Activated T-helper 2 cell treated with anti-CD3 and anti-CD28 coated beads, Interferon-gamma antibody, Interleukin-2, Interleukin-4, amounts not matched to agents 10 μg/mL and 5 μg/mL and 100 μg/mL, durations not matched to agents 14 hours and 24 hours and 36 hours (primary cell): ENCODE measurements at regions of chr16 and their contacts with region 1.

Region 1: DNA sequence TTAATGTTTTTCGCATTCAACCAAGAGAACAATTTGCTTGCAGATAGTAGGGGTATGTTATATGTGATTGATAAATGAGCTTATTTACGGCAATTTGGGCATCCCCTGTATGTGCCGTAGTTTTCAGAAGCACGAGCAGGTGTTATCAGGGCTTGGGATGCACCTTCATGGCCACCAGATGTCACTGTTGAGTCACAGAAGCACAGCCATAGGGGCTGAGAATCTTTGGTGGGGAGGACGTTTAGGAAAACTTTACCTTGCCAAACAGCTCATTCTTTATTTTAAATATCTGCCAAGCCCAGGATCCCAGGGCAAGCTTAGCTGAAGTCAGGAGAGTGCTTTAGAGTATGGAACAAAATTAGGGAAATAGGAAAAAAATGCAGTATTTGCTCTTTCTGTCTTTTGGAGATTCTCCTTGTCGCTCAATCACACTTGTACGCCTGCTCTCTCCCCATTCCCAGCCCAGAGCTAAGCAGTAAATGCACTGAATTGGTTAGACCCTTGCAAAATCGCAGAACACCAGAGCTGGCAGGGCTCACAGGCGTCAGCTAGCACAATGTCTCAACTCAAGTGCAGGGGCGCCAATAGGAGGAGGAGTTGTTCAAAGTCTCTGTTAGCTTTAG is 93.6 kb upstream of the MPHOSPH6 start:
- DNase-seq: peak; percentile 31
- H3K4me3 Mint-ChIP-seq: no peak overlapping the region
- H3K27ac Mint-ChIP-seq: no peak overlapping the region
- H3K4me1 Mint-ChIP-seq: no peaks in the 10 kb centered on the region
- H3K27me3 Mint-ChIP-seq: peaks cover 4% of the 10 kb centered on the region

Region 2: GRCh38 chr16:82157836-82158235 is 105.8 kb before region 1 on chr16:
- intact Hi-C with region 1: no loop called
- DNase-seq: no peak
- H3K4me3 Mint-ChIP-seq: no peak overlapping the region
- H3K27ac Mint-ChIP-seq: no peak overlapping the region
- H3K4me1 Mint-ChIP-seq: peaks cover 23% of the 10 kb centered on the region
- H3K27me3 Mint-ChIP-seq: no peaks in the 10 kb centered on the region

Region 3: GRCh38 chr16:82456683-82457082 is 193.1 kb after region 1 on chr16:
- intact Hi-C with region 1: loop called (anchors 5 kb)
- DNase-seq: no peak
- H3K4me3 Mint-ChIP-seq: no peak overlapping the region
- H3K27ac Mint-ChIP-seq: no peak overlapping the region
- H3K4me1 Mint-ChIP-seq: peaks cover 1% of the 10 kb centered on the region
- H3K27me3 Mint-ChIP-seq: peaks cover 2% of the 10 kb centered on the region

Region 4: GRCh38 chr16:82626791-82627261 is 363.2 kb after region 1 on chr16 and contains the start of gene CDH13:
- intact Hi-C with region 1: loop called (anchors 10 kb)
- DNase-seq: no peak
- H3K4me3 Mint-ChIP-seq: no peak within 1 kb of the TSS
- H3K27ac Mint-ChIP-seq: no peak within 1 kb of the TSS
- H3K4me1 Mint-ChIP-seq: peaks cover 4% of the 10 kb centered on the region
- H3K27me3 Mint-ChIP-seq: peaks cover 82% of the 10 kb centered on the region
- total RNA-seq, gene CDH13: not detected in 2 replicates

Region 5: DNA sequence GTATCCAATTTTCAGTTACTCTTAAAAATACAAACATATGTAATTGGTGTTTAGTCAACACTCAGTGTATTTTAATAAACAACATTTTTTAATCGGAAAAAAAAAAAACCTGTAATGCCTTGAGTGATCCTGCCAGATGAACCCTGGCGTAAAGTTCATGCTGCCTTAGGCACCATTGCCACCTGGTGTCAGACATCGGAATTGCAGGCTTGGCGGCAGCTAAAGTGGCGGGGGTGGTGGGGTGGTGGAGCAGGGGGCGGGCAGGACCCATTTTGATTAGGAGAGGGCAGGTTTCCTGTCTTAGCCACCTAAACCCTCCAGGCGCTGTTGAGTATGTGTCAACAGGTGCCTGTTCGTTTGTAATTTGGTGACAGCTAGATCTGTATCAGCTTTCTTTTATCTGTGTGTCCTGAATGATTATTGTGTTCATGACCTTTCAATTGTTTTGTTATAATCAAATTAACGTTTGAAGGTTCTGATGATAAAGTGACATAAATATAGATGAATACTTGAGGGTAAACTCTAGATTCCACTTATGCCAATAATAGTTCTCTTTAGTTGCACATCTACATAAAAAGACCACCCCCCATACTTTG is 951.9 kb after region 1 on chr16:
- intact Hi-C with region 1: loop called (anchors 5 kb)
- DNase-seq: peak; percentile 16
- H3K4me3 Mint-ChIP-seq: no peak overlapping the region
- H3K27ac Mint-ChIP-seq: no peak overlapping the region
- H3K4me1 Mint-ChIP-seq: no peaks in the 10 kb centered on the region
- H3K27me3 Mint-ChIP-seq: no peaks in the 10 kb centered on the region